OCI-LY7 (cell line): ENCODE measurements at regions of chr4 and their contacts with region 1.

Region 1: GRCh38 chr4:140252742-140253555 is 99.0 kb upstream of the MAML3 start:
- DNase-seq: peak; percentile 52
- H3K4me3 ChIP-seq: peak overlapping the region; percentile 53
- H3K27ac ChIP-seq: no peak overlapping the region
- H3K4me1 ChIP-seq: peaks cover 14% of the 10 kb centered on the region
- CTCF ChIP-seq: peak; percentile 94

Region 2: DNA sequence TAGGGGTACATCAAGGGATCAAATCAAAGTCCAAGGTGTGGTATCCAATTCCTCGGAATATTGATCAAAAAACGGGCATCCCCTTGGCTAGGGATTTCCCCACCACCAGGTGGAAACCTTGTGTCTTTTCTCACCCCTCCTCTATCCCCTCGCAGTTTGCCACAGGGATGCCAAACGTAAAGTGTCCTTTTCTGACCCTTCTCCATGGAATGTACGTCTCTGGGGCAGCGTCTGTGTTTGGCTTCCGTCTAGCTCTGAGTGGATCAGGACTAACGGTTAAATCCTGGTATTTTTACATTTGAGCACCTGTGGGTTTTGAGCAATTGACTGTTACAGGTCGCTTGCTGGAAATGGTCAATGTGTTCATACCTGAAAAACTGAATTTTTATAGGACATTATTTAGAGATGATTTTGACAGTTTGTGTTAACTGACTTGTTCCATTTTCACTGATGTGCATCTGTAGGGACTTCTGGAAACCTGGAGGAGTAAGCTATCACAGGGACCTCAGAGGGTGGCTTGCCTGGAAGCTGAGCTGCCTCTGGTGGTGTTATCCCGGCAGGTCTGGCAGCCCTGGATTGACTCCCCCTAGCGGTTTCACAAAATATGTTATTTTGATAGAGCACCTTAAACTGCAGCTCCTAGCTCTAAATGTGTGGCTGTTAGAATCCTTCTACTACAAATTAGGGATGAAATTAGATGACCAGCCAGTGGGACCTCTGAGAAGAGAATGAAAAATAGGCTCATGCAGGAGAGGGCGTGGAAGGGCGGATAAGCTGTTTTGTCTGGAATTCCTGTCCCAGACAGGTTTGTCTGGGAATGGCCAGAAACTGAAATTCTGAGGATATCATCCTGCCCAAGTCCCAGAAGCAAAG is 596.1 kb before region 1 on chr4:
- CTCF ChIA-PET with region 1: no interaction called
- POLR2A ChIA-PET with region 1: no interaction called
- intact Hi-C with region 1: loop called (anchors 2 kb)
- DNase-seq: peak; percentile 81
- H3K4me3 ChIP-seq: no peak overlapping the region
- H3K27ac ChIP-seq: no peak overlapping the region
- H3K4me1 ChIP-seq: peaks cover 3% of the 10 kb centered on the region
- CTCF ChIP-seq: peak; percentile 88

Region 3: GRCh38 chr4:139734875-139735380 is 518.0 kb before region 1 on chr4:
- CTCF ChIA-PET with region 1: no interaction called
- POLR2A ChIA-PET with region 1: no interaction called
- intact Hi-C with region 1: loop called (anchors 10 kb)
- DNase-seq: peak; percentile 20
- H3K4me3 ChIP-seq: no peak overlapping the region
- H3K27ac ChIP-seq: no peak overlapping the region
- H3K4me1 ChIP-seq: peaks cover 5% of the 10 kb centered on the region
- CTCF ChIP-seq: peak; percentile 47; the same call in 1 of the 2 replicates

Region 4: DNA sequence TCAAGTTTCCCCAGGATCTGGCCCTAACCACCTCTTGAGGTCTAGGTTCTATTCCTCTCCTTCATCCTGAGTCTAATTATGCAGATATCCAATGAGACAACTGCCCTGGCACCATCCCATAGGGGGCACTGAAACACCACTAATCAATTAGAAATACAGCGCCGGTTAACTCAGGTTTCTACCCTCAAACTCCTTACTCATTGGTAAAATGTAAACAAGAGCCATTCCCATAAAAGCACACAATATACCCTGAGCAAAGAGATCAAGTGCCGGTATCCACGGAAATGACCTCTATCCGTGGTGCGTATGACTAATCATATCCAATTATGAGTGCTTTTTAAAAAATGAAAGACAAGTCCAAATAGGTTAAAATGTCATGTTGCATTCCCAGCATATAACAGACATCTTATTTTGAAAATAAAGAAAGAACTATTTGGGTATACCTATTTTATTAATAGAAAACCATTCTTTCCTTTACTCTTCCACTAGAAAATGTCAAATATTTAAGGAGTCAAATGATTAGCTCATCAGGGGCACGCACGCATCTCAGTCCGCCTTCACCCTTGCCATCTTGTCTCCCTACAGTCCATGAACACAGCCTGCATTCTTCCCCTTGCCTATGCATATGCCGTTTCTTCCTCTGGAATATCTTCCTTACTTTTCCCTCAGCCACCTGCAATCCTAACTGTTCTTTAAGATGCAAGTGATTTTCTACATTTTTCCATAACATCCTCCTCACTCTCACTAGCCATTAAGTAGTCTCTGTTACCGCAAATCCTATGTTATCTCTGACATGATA is 240.1 kb before region 1 on chr4:
- CTCF ChIA-PET with region 1: no interaction called
- POLR2A ChIA-PET with region 1: no interaction called
- intact Hi-C with region 1: loop called (anchors 2 kb)
- DNase-seq: peak; percentile 37
- H3K4me3 ChIP-seq: no peak overlapping the region
- H3K27ac ChIP-seq: no peak overlapping the region
- H3K4me1 ChIP-seq: no peaks in the 10 kb centered on the region
- CTCF ChIP-seq: peak; percentile 82

Region 5: GRCh38 chr4:140049024-140049848 is 203.7 kb before region 1 on chr4:
- CTCF ChIA-PET with region 1: no interaction called
- POLR2A ChIA-PET with region 1: interaction called, 7 read pairs
- intact Hi-C with region 1: loop called (anchors 1 kb)
- DNase-seq: peak; percentile 74
- H3K4me3 ChIP-seq: peak overlapping the region; percentile 47
- H3K27ac ChIP-seq: no peak overlapping the region
- H3K4me1 ChIP-seq: peaks cover 32% of the 10 kb centered on the region
- CTCF ChIP-seq: no peak; the same call in 1 of the 2 replicates

Region 6: GRCh38 chr4:140153718-140154571 is 99.0 kb before region 1 on chr4 and contains the start of gene MAML3:
- CTCF ChIA-PET with region 1: no interaction called
- POLR2A ChIA-PET with region 1: interaction called, 8 read pairs
- intact Hi-C with region 1: loop called (anchors 1 kb)
- DNase-seq: peak; percentile 91
- H3K4me3 ChIP-seq: peak within 1 kb of the TSS; percentile 72
- H3K27ac ChIP-seq: peak within 1 kb of the TSS; percentile 52
- H3K4me1 ChIP-seq: peaks cover 59% of the 10 kb centered on the region
- CTCF ChIP-seq: no peak
- total RNA-seq, gene MAML3: 1.2 and 1.8 TPM in 2 replicates

Region 7: GRCh38 chr4:140266991-140267426 is 14.1 kb after region 1 on chr4:
- CTCF ChIA-PET with region 1: no interaction called
- POLR2A ChIA-PET with region 1: no interaction called
- intact Hi-C with region 1: no loop called
- DNase-seq: no peak
- H3K4me3 ChIP-seq: no peak overlapping the region
- H3K27ac ChIP-seq: no peak overlapping the region
- H3K4me1 ChIP-seq: no peaks in the 10 kb centered on the region
- CTCF ChIP-seq: no peak